ENCODE measurements at regions of chr6 and their contacts with region 1.

Region 1: DNA sequence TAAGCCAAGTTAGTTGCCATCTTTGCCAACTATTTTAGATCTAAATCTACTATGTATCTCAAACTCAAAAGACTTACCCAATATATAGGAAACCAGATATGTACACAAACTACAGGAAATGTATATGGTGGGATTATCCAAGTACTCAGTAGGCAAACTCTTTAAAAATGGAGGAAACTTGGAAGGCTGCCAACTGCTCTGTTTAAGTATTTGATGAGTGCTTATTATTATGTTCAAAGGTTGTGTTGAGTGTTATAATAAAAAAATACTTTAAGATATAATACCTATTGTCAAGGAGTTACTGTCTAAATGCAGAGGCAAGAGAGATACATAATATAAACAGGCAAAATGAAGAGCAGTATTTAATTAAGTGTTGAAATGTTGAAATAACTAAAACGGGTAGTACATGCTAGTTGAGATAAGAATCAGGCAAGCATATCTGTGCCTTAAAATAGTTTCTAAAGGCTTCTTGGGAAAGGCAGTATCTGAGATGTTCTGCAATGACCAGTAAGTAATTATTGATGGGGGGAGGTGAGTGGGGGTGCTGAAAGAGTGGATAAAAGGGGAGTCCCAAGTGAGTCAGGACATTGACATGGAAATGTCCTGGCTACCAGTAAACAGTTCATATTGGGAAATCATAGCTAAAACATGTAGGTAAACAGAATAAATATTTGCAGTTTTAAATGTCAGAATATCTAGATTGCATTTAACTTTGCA is 6.5 kb upstream of the DST start:
- DNase-seq: no peak
- H3K4me3 ChIP-seq: no peak overlapping the region
- H3K27ac ChIP-seq: peak overlapping the region in 2 of 4 donors; percentile 5 to 12
- H3K4me1 ChIP-seq: peaks cover 11 to 38% (median 27%) of the 10 kb centered on the region in 4 donors
- H3K27me3 ChIP-seq: no peaks in the 10 kb centered on the region
- CTCF ChIP-seq: no peak
- EP300 ChIP-seq: no peak
- POLR2A ChIP-seq: no peak

Region 2: GRCh38 chr6:56699066-56699654 is 49.9 kb after region 1 on chr6:
- in situ Hi-C with region 1: loop called in 3 of 4 experiments (anchors 5 to 10 kb)
- intact Hi-C with region 1: no loop called
- DNase-seq: no peak
- H3K4me3 ChIP-seq: no peak overlapping the region
- H3K27ac ChIP-seq: no peak overlapping the region
- H3K4me1 ChIP-seq: peaks cover 0 to 29% (median 7%) of the 10 kb centered on the region in 4 donors
- H3K27me3 ChIP-seq: no peaks in the 10 kb centered on the region
- CTCF ChIP-seq: peak; percentile 48 to 65 (median 57)
- EP300 ChIP-seq: no peak
- POLR2A ChIP-seq: no peak

Region 3: DNA sequence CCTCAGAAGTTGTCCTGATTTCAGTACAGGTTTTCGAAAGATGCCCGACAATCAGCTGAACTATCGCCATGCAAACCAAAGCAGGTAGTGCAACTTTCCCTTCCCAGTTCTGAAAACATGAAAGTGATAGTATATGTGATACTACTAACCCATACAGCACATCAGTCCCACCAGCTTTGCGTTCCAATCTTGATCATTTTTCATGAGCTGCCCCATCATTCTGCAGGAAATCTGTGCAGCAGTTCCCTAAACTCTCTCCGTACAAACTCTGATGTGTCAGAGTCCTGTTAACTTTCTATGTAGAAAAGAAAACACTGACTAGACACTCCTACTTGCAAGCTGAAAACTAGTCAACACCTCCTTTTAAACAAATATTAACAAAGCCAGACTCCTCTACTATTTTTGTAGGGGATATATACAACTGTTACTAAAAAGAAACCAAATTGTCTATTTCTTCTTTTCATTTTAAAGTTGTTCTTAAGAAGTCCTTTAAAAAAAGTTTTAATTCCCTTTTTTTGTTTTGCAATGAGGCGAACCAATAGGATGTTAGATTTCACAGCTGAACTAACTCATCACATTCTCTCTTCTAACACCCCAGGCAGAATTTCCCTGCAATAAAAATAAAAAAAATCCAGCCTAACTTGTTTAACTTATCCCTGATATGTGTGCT is 93.0 kb after region 1 on chr6:
- in situ Hi-C with region 1: no loop called
- intact Hi-C with region 1: no loop called
- DNase-seq: no peak
- H3K4me3 ChIP-seq: peak overlapping the region in 1 of 4 donors; percentile 28
- H3K27ac ChIP-seq: peak overlapping the region; percentile 43 to 54 (median 46)
- H3K4me1 ChIP-seq: peaks cover 0 to 33% (median 8%) of the 10 kb centered on the region in 4 donors
- H3K27me3 ChIP-seq: no peaks in the 10 kb centered on the region
- CTCF ChIP-seq: no peak
- EP300 ChIP-seq: no peak
- POLR2A ChIP-seq: no peak